ENCODE measurements at regions of chrX and their contacts with region 1.

Region 1: GRCh38 chrX:66728818-66729271 is 90.0 kb upstream of the EDA2R start:
- DNase-seq: peak; percentile 48
- H3K4me3 ChIP-seq: peak overlapping the region; percentile 28
- H3K4me3 Mint-ChIP-seq: peak overlapping the region; percentile 75
- H3K27ac Mint-ChIP-seq: peak overlapping the region; percentile 45
- H3K4me1 ChIP-seq: no peaks in the 10 kb centered on the region
- H3K4me1 Mint-ChIP-seq: no peaks in the 10 kb centered on the region
- H3K27me3 ChIP-seq: no peaks in the 10 kb centered on the region
- H3K27me3 Mint-ChIP-seq: no peaks in the 10 kb centered on the region
- CTCF ChIP-seq: peak; percentile 49 to 62

Region 2: GRCh38 chrX:65595460-65595876 is 1133.4 kb before region 1 on chrX:
- CTCF ChIA-PET with region 1: no interaction called
- POLR2A ChIA-PET with region 1: no interaction called
- intact Hi-C with region 1: loop called (anchors 5 kb)
- DNase-seq: peak; percentile 66 to 70
- H3K4me3 ChIP-seq: no peak overlapping the region
- H3K4me3 Mint-ChIP-seq: no peak overlapping the region
- H3K27ac Mint-ChIP-seq: no peak overlapping the region
- H3K4me1 ChIP-seq: no peaks in the 10 kb centered on the region
- H3K4me1 Mint-ChIP-seq: no peaks in the 10 kb centered on the region
- H3K27me3 ChIP-seq: no peaks in the 10 kb centered on the region
- H3K27me3 Mint-ChIP-seq: peaks cover 9% of the 10 kb centered on the region
- CTCF ChIP-seq: peak; percentile 70 to 71